T-cell (primary cell): ENCODE measurements at regions of chr2 and their contacts with region 1.

Region 1: GRCh38 chr2:11129598-11130449 is 25.4 kb upstream of the SLC66A3 start:
- DNase-seq: peak; percentile 65 to 89 (median 79)
- ATAC-seq: peak; percentile 91 to 94 (median 92)
- H3K4me3 ChIP-seq: peak overlapping the region; percentile 39 to 50
- H3K4me3 Mint-ChIP-seq: peak overlapping the region; percentile 69 to 85 (median 73)
- H3K27ac ChIP-seq: peak overlapping the region; percentile 59
- H3K27ac Mint-ChIP-seq: peak overlapping the region; percentile 79 to 84
- H3K4me1 ChIP-seq: peaks cover 10 to 48% of the 10 kb centered on the region in 2 experiments
- H3K4me1 Mint-ChIP-seq: peaks cover 27 to 43% (median 30%) of the 10 kb centered on the region in 3 donors
- H3K27me3 ChIP-seq: no peaks in the 10 kb centered on the region
- H3K27me3 Mint-ChIP-seq: no peaks in the 10 kb centered on the region

Region 2: GRCh38 chr2:10971881-10972260 is 158.0 kb before region 1 on chr2:
- CTCF ChIA-PET with region 1: no interaction called
- POLR2A ChIA-PET with region 1: no interaction called
- DNase-seq: no peak
- ATAC-seq: no peak
- H3K4me3 ChIP-seq: no peak overlapping the region
- H3K4me3 Mint-ChIP-seq: no peak overlapping the region
- H3K27ac ChIP-seq: no peak overlapping the region
- H3K27ac Mint-ChIP-seq: no peak overlapping the region
- H3K4me1 ChIP-seq: no peaks in the 10 kb centered on the region
- H3K4me1 Mint-ChIP-seq: peaks cover 0 to 2% (median 1%) of the 10 kb centered on the region in 3 donors
- H3K27me3 ChIP-seq: peaks cover 0 to 37% of the 10 kb centered on the region in 2 experiments
- H3K27me3 Mint-ChIP-seq: peaks cover 16 to 36% of the 10 kb centered on the region in 2 donors

Region 3: GRCh38 chr2:11154923-11155380 is 25.1 kb after region 1 on chr2:
- CTCF ChIA-PET with region 1: interaction called, 7 to 10 read pairs
- POLR2A ChIA-PET with region 1: no interaction called
- DNase-seq: peak; percentile 93 to 99 (median 98)
- ATAC-seq: peak; percentile 88 to 92 (median 90)
- H3K4me3 ChIP-seq: peak overlapping the region; percentile 49 to 55
- H3K4me3 Mint-ChIP-seq: peak overlapping the region; percentile 78 to 81 (median 80)
- H3K27ac ChIP-seq: peak overlapping the region; percentile 79
- H3K27ac Mint-ChIP-seq: peak overlapping the region; percentile 93
- H3K4me1 ChIP-seq: peaks cover 8 to 31% of the 10 kb centered on the region in 2 experiments
- H3K4me1 Mint-ChIP-seq: peaks cover 8 to 26% (median 19%) of the 10 kb centered on the region in 3 donors
- H3K27me3 ChIP-seq: no peaks in the 10 kb centered on the region
- H3K27me3 Mint-ChIP-seq: no peaks in the 10 kb centered on the region

Region 4: DNA sequence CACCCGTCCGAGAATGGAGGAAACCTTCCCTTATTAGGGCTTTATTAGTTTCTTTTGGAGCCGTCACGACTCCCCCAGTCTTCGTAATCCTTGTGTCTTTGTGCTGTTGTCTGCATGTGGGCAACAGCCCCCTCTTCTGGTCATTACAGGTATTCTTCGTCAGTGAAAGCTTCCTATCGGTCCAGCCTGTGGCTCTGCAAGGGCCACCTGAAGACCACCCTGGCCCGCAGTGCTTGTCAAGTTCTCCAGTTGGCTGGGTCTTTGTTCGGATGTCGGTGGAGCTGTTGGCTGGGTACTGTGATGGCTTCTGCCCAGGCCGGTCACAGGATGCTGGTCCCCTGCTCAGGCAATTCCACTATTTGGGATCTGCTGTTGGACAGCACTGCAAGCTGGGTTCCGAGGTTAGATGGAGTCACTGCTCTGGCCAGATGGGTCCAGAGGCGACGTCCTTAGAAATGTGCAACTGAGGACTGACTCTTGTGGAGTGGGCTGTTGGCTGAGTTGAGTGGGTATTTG is 317.0 kb after region 1 on chr2:
- CTCF ChIA-PET with region 1: interaction called, 19 to 41 read pairs
- POLR2A ChIA-PET with region 1: no interaction called
- DNase-seq: peak in 33 of 35 experiments; percentile 8 to 76 (median 34)
- ATAC-seq: peak; percentile 29 to 65 (median 56)
- H3K4me3 ChIP-seq: no peak overlapping the region
- H3K4me3 Mint-ChIP-seq: no peak overlapping the region
- H3K27ac ChIP-seq: no peak overlapping the region
- H3K27ac Mint-ChIP-seq: no peak overlapping the region
- H3K4me1 ChIP-seq: no peaks in the 10 kb centered on the region
- H3K4me1 Mint-ChIP-seq: no peaks in the 10 kb centered on the region
- H3K27me3 ChIP-seq: no peaks in the 10 kb centered on the region
- H3K27me3 Mint-ChIP-seq: no peaks in the 10 kb centered on the region

Region 5: DNA sequence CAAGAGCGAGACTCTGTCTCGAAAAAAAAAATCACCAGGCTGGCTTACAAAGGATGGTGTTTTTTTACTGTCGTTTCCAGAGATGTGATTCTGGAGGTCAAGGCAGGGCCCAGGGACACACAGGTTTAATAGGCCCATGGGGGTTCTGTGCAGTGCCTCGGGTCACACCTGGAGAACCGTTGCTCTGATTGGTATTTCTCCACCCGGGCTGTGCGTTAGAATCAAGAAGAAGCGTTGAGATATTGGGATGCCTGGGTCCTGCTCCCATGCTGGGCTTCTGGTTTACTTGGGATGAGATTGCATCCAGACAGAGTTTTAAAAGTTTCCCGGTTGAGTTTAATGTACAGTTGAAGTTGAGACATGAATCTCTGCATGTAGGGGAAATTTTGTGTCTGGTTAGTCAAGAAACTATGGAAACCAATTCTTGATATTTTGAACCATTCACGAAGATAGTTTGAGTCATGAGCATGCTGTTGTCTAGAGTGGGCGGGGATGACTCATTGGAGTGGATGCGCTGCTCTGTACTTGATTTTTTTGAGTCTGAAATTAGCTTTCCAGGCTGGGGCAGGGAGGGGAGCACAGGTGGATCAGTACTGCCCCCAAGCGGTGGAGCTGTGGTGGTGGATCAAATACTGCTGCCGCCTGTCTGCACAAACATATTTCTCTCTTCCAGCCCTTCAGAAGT is 454.2 kb after region 1 on chr2:
- CTCF ChIA-PET with region 1: interaction called, 7 to 12 read pairs
- POLR2A ChIA-PET with region 1: no interaction called
- DNase-seq: peak in 31 of 35 experiments; percentile 14 to 63 (median 32)
- ATAC-seq: peak; percentile 60 to 79 (median 76)
- H3K4me3 ChIP-seq: no peak overlapping the region
- H3K4me3 Mint-ChIP-seq: no peak overlapping the region
- H3K27ac ChIP-seq: no peak overlapping the region
- H3K27ac Mint-ChIP-seq: no peak overlapping the region
- H3K4me1 ChIP-seq: no peaks in the 10 kb centered on the region
- H3K4me1 Mint-ChIP-seq: peaks cover 0 to 5% (median 3%) of the 10 kb centered on the region in 3 donors
- H3K27me3 ChIP-seq: peaks cover 0 to 27% of the 10 kb centered on the region in 2 experiments
- H3K27me3 Mint-ChIP-seq: peaks cover 7 to 12% of the 10 kb centered on the region in 2 donors

Region 6: DNA sequence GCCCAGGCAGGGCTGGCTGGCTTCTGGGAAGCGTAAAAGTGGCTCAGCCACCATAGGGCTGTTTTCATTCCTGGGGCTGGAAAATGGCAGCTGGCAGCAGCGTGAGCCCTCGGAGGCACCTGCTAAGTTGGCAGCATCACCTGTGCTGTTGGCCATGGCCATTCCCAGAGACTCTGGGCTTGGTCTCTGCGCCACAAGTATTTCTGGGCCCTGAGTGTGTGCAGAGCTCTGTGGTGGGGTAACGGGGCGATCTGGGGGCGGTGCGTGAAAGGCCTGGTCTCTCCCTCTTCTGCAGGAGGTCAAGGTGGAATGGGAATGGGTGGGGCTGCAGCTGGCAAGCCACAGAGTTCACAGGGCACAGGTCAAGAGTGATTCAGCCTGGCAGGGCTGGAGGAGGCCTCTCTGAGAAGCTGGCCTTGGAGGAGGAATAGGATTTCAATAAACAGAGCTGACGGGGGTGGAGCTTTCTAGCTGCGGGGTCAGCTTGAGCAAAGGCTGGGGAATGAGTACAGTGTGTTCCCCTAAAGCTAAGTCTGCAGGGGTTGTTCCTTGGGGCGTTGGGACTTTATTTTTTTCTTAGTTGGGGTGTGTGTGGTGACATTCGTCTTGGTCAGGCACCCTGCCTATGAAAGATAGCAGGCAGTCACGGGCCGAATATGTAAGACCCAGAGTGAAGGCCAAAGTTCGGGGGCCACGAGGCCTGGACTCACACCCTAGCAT is 550.5 kb after region 1 on chr2:
- CTCF ChIA-PET with region 1: no interaction called
- POLR2A ChIA-PET with region 1: no interaction called
- DNase-seq: no peak
- ATAC-seq: no peak
- H3K4me3 ChIP-seq: no peak overlapping the region
- H3K4me3 Mint-ChIP-seq: no peak overlapping the region
- H3K27ac ChIP-seq: no peak overlapping the region
- H3K27ac Mint-ChIP-seq: no peak overlapping the region
- H3K4me1 ChIP-seq: no peaks in the 10 kb centered on the region
- H3K4me1 Mint-ChIP-seq: peaks cover 4 to 8% (median 5%) of the 10 kb centered on the region in 3 donors
- H3K27me3 ChIP-seq: peaks cover 9 to 51% of the 10 kb centered on the region in 2 experiments
- H3K27me3 Mint-ChIP-seq: peaks cover 23 to 39% of the 10 kb centered on the region in 2 donors